B cell (primary cell): ENCODE measurements at regions of chr22 and their contacts with region 1.

Region 1: DNA sequence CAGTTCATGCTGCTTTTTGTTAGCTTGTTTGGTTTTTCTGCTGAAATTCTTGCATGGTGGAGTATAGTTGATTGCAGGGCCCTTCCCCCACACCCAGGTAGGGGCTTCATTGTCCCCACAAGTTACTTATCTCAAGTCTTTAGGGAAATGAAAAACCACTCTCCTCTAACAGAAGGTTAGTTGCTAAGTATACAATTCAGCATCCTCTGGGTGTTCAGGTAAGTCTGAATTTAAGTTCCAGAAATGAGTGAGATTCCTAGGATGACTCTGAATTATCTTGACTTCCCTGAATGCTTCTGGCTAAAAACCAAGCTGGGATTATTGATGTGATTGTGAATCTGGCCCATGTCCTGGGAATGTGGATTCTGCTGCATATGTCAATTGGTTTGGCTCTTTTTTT is 40.3 kb downstream of the BCL2L13 start:
- DNase-seq: no peak
- ATAC-seq: no peak
- H3K4me3 ChIP-seq: no peak overlapping the region
- H3K4me3 Mint-ChIP-seq: no peak overlapping the region
- H3K27ac ChIP-seq: no peak overlapping the region
- H3K27ac Mint-ChIP-seq: no peak overlapping the region
- H3K4me1 ChIP-seq: peaks cover 0 to 2% of the 10 kb centered on the region in 2 donors
- H3K4me1 Mint-ChIP-seq: peaks cover 13% of the 10 kb centered on the region
- H3K27me3 ChIP-seq: no peaks in the 10 kb centered on the region
- H3K27me3 Mint-ChIP-seq: no peaks in the 10 kb centered on the region
- CTCF ChIP-seq: no peak

Region 2: DNA sequence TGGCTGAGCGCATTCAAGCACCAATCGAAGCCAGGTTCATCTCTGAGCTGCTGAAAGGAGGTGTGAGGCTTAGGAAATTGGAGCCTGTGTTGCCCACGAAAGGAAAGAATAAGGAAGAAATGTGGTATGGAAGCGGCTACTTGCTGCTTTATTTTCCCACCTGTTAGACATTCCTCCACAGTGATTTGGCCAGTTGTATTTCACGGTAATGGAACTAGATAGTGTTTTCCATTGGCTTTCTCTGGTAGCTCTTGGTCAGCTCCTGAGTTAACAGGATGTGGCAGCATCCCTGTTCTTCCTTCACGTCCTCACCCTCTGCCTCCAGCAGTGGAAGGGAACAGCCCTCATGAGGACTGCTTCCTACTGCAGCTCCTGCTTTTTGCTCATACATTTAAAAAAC is 50.7 kb after region 1 on chr22:
- CTCF ChIA-PET with region 1: no interaction called
- POLR2A ChIA-PET with region 1: interaction called, 16 read pairs
- intact Hi-C with region 1: no loop called
- DNase-seq: no peak
- ATAC-seq: no peak
- H3K4me3 ChIP-seq: no peak overlapping the region
- H3K4me3 Mint-ChIP-seq: no peak overlapping the region
- H3K27ac ChIP-seq: no peak overlapping the region
- H3K27ac Mint-ChIP-seq: no peak overlapping the region
- H3K4me1 ChIP-seq: no peaks in the 10 kb centered on the region
- H3K4me1 Mint-ChIP-seq: peaks cover 1% of the 10 kb centered on the region
- H3K27me3 ChIP-seq: no peaks in the 10 kb centered on the region
- H3K27me3 Mint-ChIP-seq: no peaks in the 10 kb centered on the region
- CTCF ChIP-seq: no peak

Region 3: GRCh38 chr22:17753401-17753989 is 74.6 kb after region 1 on chr22:
- CTCF ChIA-PET with region 1: no interaction called
- POLR2A ChIA-PET with region 1: no interaction called
- intact Hi-C with region 1: no loop called
- DNase-seq: no peak
- ATAC-seq: no peak
- H3K4me3 ChIP-seq: no peak overlapping the region
- H3K4me3 Mint-ChIP-seq: no peak overlapping the region
- H3K27ac ChIP-seq: no peak overlapping the region
- H3K27ac Mint-ChIP-seq: no peak overlapping the region
- H3K4me1 ChIP-seq: no peaks in the 10 kb centered on the region
- H3K4me1 Mint-ChIP-seq: no peaks in the 10 kb centered on the region
- H3K27me3 ChIP-seq: no peaks in the 10 kb centered on the region
- H3K27me3 Mint-ChIP-seq: no peaks in the 10 kb centered on the region
- CTCF ChIP-seq: no peak